ENCODE measurements at regions of chr12 and their contacts with region 1.

Region 1: GRCh38 chr12:56425193-56425592 is 24.0 kb downstream of the TIMELESS start:
- DNase-seq: no peak
- H3K4me3 ChIP-seq: no peak overlapping the region
- H3K27ac ChIP-seq: no peak overlapping the region
- H3K4me1 ChIP-seq: no peaks in the 10 kb centered on the region
- H3K27me3 ChIP-seq: no peaks in the 10 kb centered on the region
- CTCF ChIP-seq: no peak
- EP300 ChIP-seq: no peak
- POLR2A ChIP-seq: no peak

Region 2: GRCh38 chr12:56315622-56316473 is 109.3 kb before region 1 on chr12 and contains the start of gene CNPY2:
- intact Hi-C with region 1: no loop called
- DNase-seq: peak; percentile 99
- H3K4me3 ChIP-seq: peak within 1 kb of the TSS; percentile 65 to 98 (median 84)
- H3K27ac ChIP-seq: peak within 1 kb of the TSS; percentile 89 to 96 (median 93)
- H3K4me1 ChIP-seq: peaks cover 9 to 22% (median 17%) of the 10 kb centered on the region in 4 donors
- H3K27me3 ChIP-seq: no peaks in the 10 kb centered on the region
- CTCF ChIP-seq: peak in 2 of 3 experiments; percentile 5 to 13
- EP300 ChIP-seq: no peak
- POLR2A ChIP-seq: peak; percentile 11
- total RNA-seq, gene CNPY2: 48.8 to 61.5 (median 50.3) TPM

Region 3: DNA sequence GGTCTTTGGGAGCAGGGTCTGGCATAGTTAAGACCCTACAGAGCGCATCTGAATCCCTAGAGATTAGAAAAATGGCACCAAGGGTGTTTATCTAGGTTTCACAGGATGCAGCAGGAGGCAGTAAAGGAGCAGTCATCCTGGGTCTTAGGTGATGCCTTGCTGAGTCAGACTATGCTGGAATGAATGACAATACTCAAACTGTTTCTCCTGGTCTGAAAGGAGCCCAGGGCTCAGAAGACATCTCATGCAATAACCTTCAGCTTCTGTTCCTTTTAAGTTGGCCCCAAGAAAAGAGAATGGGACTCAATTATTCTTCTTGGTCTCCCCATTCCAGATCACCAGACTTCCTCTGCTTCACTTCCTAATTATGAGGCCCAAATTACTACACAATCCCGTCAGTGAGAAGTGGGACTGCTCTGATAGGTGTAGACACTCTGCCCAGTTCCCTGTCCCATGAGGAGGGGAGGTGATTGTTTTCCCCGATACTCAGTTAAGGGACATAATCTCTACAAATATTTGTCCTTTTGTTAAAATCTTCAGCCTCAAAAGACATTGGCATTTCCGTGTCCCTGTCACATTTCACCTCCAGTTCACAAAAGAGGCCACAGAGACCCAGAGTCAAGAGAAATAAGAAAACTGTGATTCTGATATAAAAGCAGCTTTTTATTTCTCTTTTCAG is 47.7 kb before region 1 on chr12:
- intact Hi-C with region 1: loop called (anchors 10 kb)
- DNase-seq: no peak
- H3K4me3 ChIP-seq: no peak overlapping the region
- H3K27ac ChIP-seq: no peak overlapping the region
- H3K4me1 ChIP-seq: no peaks in the 10 kb centered on the region
- H3K27me3 ChIP-seq: no peaks in the 10 kb centered on the region
- CTCF ChIP-seq: no peak
- EP300 ChIP-seq: no peak
- POLR2A ChIP-seq: no peak